Common myeloid progenitor, CD34-positive (primary cell): ENCODE measurements at regions of chr10 and their contacts with region 1.

Region 1: GRCh38 chr10:99612167-99612831 is 7.9 kb downstream of the SLC25A28 start:
- DNase-seq: peak; percentile 49 to 60 (median 50)
- H3K4me3 ChIP-seq: no peak overlapping the region
- H3K27ac ChIP-seq: no peak overlapping the region
- H3K4me1 ChIP-seq: peaks cover 18 to 74% (median 44%) of the 10 kb centered on the region in 4 experiments
- H3K27me3 ChIP-seq: no peaks in the 10 kb centered on the region

Region 2: GRCh38 chr10:99394761-99395386 is 217.4 kb before region 1 on chr10:
- CTCF ChIA-PET with region 1: interaction called, 49 read pairs
- POLR2A ChIA-PET with region 1: no interaction called
- DNase-seq: no peak
- H3K4me3 ChIP-seq: no peak overlapping the region
- H3K27ac ChIP-seq: no peak overlapping the region
- H3K4me1 ChIP-seq: peaks cover 3 to 25% (median 18%) of the 10 kb centered on the region in 4 experiments
- H3K27me3 ChIP-seq: no peaks in the 10 kb centered on the region

Region 3: DNA sequence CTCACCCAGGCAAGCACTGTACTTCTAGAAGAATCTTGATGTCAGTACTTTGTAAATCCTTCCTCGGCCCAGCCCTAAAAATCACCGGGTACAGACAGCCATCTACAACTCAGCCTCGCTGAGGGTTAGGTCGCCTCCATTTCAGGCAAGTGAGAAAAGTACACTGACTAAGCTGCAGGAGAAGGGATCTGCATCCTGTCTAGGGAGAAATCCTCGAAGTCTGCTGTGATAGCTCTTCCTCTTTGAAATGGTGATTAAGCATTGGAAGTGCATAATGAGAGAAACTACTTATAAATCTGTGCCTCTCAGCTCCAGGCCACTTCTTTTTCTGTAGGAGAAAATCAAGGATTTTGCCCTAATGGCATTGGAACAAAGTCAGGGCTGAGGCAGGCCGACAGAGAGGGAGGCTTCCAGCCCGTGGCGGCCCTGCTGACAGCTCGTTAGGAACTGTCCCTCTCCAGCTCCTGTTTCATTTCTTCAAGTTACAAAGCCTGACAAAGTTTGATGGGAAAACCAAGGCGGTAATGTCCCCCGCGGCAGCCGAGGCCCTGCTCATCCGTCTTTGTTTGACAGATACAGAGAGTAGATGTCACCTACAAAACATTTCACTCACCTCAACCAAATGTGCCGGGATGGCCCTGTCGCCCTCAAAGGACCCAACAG is 167.8 kb before region 1 on chr10:
- CTCF ChIA-PET with region 1: interaction called, 13 read pairs
- POLR2A ChIA-PET with region 1: no interaction called
- DNase-seq: no peak
- H3K4me3 ChIP-seq: no peak overlapping the region
- H3K27ac ChIP-seq: no peak overlapping the region
- H3K4me1 ChIP-seq: no peaks in the 10 kb centered on the region
- H3K27me3 ChIP-seq: peaks cover 0 to 1% (median 0%) of the 10 kb centered on the region in 5 experiments

Region 4: GRCh38 chr10:99548041-99548530 is 64.2 kb before region 1 on chr10:
- CTCF ChIA-PET with region 1: interaction called, 11 read pairs
- POLR2A ChIA-PET with region 1: no interaction called
- DNase-seq: peak in 2 of 3 donors; percentile 74
- H3K4me3 ChIP-seq: no peak overlapping the region
- H3K27ac ChIP-seq: no peak overlapping the region
- H3K4me1 ChIP-seq: peaks cover 0 to 15% (median 13%) of the 10 kb centered on the region in 4 experiments
- H3K27me3 ChIP-seq: peaks cover 0 to 2% (median 0%) of the 10 kb centered on the region in 5 experiments

Region 5: DNA sequence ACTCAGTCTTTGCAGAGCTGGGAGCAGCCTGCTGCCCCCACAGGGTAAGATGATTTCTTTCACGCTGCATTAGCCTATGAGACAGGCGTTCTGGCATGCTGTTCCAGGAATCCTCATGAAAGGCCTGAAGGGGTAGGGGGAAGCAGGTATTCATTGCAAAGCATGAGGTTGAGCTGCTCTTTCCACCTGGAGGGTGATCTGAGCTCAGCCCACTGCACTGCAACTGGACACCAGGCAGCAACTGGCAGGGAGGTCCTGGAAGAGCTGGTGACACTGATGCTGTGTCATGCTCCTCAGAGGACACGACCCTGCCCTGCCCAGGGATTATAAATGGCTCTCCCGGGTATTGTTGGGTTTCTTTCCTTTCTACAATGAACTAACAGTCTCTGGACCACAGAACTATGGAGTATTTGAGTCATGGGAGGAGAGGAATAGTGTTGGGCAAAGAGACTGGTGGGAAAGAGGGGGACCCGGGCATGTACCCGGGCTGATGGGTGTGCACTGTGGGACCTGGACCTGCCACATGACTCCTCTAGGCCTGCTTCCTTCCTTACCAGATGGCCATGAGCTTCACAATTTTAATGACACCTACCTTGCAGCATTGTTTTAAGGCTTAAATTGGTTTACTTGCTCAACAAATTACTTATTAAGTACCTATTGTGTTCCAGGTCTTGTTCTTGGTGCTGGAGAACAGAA is 16.4 kb before region 1 on chr10:
- CTCF ChIA-PET with region 1: interaction called, 17 read pairs
- POLR2A ChIA-PET with region 1: no interaction called
- DNase-seq: no peak
- H3K4me3 ChIP-seq: no peak overlapping the region
- H3K27ac ChIP-seq: no peak overlapping the region
- H3K4me1 ChIP-seq: peaks cover 0 to 4% (median 0%) of the 10 kb centered on the region in 4 experiments
- H3K27me3 ChIP-seq: no peaks in the 10 kb centered on the region